Activated T-helper 2 cell treated with anti-CD3 and anti-CD28 coated beads, Interferon-gamma antibody, Interleukin-2, Interleukin-4, amounts not matched to agents 10 μg/mL and 5 μg/mL and 100 μg/mL, durations not matched to agents 14 hours and 24 hours and 36 hours (primary cell): ENCODE measurements at regions of chr6 and their contacts with region 1.

Region 1: GRCh38 chr6:16657768-16658167 is 103.5 kb downstream of the ATXN1 start:
- DNase-seq: no peak
- H3K4me3 Mint-ChIP-seq: peak overlapping the region; percentile 61
- H3K27ac Mint-ChIP-seq: peak overlapping the region; percentile 86
- H3K4me1 Mint-ChIP-seq: peaks cover 66% of the 10 kb centered on the region
- H3K27me3 Mint-ChIP-seq: no peaks in the 10 kb centered on the region

Region 2: DNA sequence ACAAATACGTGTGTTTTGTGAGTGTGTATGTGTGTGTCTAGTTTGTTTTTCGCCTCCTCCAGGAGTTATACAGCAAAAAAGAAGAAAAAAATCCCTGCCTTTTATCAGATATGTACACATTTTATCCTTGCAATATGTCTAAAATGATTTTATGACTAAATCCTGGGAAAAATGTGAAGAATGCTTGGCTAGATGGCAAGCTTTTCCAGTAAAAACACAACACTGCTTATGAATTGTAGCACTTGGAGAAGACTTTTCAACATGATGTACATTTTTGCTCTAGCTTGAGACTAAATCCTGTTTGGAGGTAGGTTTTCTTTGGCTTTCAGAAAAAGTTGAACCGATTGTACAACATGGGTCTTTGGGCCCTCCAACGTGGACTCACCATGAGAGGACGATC is 259.2 kb before region 1 on chr6:
- intact Hi-C with region 1: loop called (anchors 5 kb)
- DNase-seq: no peak
- H3K4me3 Mint-ChIP-seq: no peak overlapping the region
- H3K27ac Mint-ChIP-seq: no peak overlapping the region
- H3K4me1 Mint-ChIP-seq: peaks cover 37% of the 10 kb centered on the region
- H3K27me3 Mint-ChIP-seq: no peaks in the 10 kb centered on the region

Region 3: DNA sequence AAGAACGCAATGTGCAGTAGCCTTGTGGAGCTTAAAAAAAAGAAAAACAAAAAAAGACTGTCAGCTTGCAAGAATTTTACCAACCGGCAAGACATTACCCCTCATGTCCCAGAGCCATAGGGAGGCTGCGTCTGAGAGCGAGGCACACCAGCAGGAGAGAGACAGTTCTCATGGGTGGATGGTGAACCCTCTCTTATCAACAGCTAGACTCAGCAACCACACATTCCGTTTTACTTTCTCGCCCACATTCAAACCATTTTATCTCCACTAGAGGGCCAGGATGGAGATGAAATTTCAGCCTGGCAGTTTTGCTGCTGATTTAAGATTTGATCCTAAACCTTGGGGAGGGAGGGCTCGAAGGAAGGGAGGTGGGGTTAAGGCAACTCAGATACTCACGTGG is 143.5 kb before region 1 on chr6:
- intact Hi-C with region 1: loop called (anchors 5 kb)
- DNase-seq: peak; percentile 26
- H3K4me3 Mint-ChIP-seq: peak overlapping the region; percentile 49
- H3K27ac Mint-ChIP-seq: peak overlapping the region; percentile 75
- H3K4me1 Mint-ChIP-seq: peaks cover 76% of the 10 kb centered on the region
- H3K27me3 Mint-ChIP-seq: no peaks in the 10 kb centered on the region

Region 4: GRCh38 chr6:16602035-16602434 is 55.7 kb before region 1 on chr6:
- intact Hi-C with region 1: loop called (anchors 2 kb)
- DNase-seq: peak; percentile 13
- H3K4me3 Mint-ChIP-seq: no peak overlapping the region
- H3K27ac Mint-ChIP-seq: peak overlapping the region; percentile 74
- H3K4me1 Mint-ChIP-seq: peaks cover 37% of the 10 kb centered on the region
- H3K27me3 Mint-ChIP-seq: no peaks in the 10 kb centered on the region

Region 5: DNA sequence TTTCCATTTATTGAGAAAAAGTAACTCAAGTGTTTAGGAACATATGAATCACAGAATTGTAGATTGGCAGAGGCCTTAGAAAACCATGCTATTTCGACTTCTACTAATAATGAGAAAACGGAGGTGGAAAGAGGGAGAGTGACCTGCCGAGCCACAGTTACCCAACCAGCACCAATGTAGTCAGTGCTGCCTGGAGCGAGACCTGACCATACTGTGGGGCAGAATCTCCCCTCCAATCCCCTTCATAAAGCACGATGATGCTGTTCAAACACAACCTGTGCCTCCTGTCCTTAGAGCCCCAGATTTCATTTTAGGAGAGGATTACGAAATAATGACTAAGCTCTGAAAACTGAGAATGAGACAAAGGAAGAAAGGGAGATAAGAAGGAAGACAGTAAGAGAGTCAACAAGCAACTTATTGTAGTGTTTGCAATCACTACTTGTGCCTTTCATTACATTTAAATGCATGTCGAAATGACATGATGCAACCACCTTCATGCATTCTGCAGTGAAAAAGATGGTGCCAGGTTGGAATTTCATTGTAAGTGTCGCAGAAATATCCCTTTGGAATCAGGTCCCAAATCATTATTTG is 32.9 kb after region 1 on chr6:
- intact Hi-C with region 1: loop called (anchors 1 kb)
- DNase-seq: no peak
- H3K4me3 Mint-ChIP-seq: peak overlapping the region; percentile 51
- H3K27ac Mint-ChIP-seq: peak overlapping the region; percentile 93
- H3K4me1 Mint-ChIP-seq: peaks cover 76% of the 10 kb centered on the region
- H3K27me3 Mint-ChIP-seq: no peaks in the 10 kb centered on the region

Region 6: GRCh38 chr6:16741112-16742016 is 83.6 kb after region 1 on chr6:
- intact Hi-C with region 1: loop called (anchors 1 kb)
- DNase-seq: no peak
- H3K4me3 Mint-ChIP-seq: no peak overlapping the region
- H3K27ac Mint-ChIP-seq: peak overlapping the region; percentile 23
- H3K4me1 Mint-ChIP-seq: peaks cover 60% of the 10 kb centered on the region
- H3K27me3 Mint-ChIP-seq: no peaks in the 10 kb centered on the region